ENCODE measurements at regions of chr3 and their contacts with region 1.

Region 1: DNA sequence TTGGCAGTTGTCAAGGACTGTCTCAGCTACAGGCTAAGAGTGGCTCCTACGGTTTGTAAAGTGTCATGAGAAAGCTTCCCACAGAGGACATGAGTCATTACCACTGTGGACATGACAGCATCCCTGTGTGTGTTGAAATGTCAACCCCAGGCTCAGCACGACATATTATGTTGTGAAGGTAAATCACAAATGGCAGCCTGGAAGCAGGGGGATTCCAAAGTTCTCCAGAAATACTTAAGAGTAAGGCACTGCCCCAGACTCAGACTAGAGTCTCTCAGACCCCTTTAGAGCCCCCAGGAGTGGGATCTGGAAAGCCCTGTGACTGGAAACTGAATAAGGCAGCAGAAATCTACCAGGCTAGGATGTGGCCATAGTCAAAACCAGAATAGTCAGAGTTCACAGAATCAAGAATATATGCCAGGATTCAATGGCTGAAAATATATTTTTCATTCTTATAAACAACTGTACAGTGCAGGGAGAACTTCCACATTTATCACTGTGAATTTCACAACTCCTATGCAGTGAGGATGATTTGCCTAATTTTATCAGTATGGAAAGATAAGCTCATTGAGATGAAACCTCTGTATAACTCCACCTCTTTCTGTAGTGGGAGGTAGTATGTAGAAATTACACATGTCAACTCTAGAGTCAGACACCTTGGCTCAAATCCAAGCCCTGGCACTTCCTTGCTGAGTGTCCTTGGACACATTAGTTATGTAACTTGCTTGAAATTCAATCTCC is 237.1 kb upstream of the CFAP20DC start:
- DNase-seq: peak; percentile 9
- H3K4me3 Mint-ChIP-seq: no peak overlapping the region
- H3K27ac Mint-ChIP-seq: peak overlapping the region; percentile 86
- H3K4me1 Mint-ChIP-seq: peaks cover 20% of the 10 kb centered on the region
- H3K27me3 Mint-ChIP-seq: peaks cover 4% of the 10 kb centered on the region

Region 2: GRCh38 chr3:59212128-59212779 is 74.7 kb before region 1 on chr3:
- intact Hi-C with region 1: loop called (anchors 2 kb)
- DNase-seq: no peak
- H3K4me3 Mint-ChIP-seq: no peak overlapping the region
- H3K27ac Mint-ChIP-seq: no peak overlapping the region
- H3K4me1 Mint-ChIP-seq: no peaks in the 10 kb centered on the region
- H3K27me3 Mint-ChIP-seq: peaks cover 12% of the 10 kb centered on the region

Region 3: DNA sequence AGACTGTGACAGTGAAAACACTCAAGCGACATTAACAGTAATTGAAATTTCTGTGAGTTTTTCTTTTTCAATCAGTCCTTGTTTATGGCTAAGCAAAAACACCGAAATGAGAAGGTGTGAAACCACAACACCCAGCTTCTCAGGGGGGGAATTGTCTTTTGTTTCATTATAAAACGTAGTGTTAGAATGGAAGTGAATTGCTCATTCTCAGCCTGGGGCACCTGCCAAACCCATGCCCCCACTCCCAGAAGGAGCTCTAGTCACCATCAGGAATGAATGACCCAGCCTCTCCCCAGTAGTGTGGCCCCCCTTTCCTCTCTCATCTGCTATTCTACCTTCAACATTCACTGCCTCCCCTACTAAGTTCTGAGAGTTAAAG is 51.3 kb before region 1 on chr3:
- intact Hi-C with region 1: loop called (anchors 2 kb)
- DNase-seq: no peak
- H3K4me3 Mint-ChIP-seq: no peak overlapping the region
- H3K27ac Mint-ChIP-seq: no peak overlapping the region
- H3K4me1 Mint-ChIP-seq: peaks cover 11% of the 10 kb centered on the region
- H3K27me3 Mint-ChIP-seq: peaks cover 8% of the 10 kb centered on the region

Region 4: GRCh38 chr3:59320080-59320479 is 33.1 kb after region 1 on chr3:
- intact Hi-C with region 1: no loop called
- DNase-seq: no peak
- H3K4me3 Mint-ChIP-seq: no peak overlapping the region
- H3K27ac Mint-ChIP-seq: no peak overlapping the region
- H3K4me1 Mint-ChIP-seq: peaks cover 4% of the 10 kb centered on the region
- H3K27me3 Mint-ChIP-seq: no peaks in the 10 kb centered on the region

Region 5: GRCh38 chr3:59406943-59407342 is 120.0 kb after region 1 on chr3:
- intact Hi-C with region 1: no loop called
- DNase-seq: no peak
- H3K4me3 Mint-ChIP-seq: no peak overlapping the region
- H3K27ac Mint-ChIP-seq: no peak overlapping the region
- H3K4me1 Mint-ChIP-seq: peaks cover 15% of the 10 kb centered on the region
- H3K27me3 Mint-ChIP-seq: peaks cover 1% of the 10 kb centered on the region

Region 6: DNA sequence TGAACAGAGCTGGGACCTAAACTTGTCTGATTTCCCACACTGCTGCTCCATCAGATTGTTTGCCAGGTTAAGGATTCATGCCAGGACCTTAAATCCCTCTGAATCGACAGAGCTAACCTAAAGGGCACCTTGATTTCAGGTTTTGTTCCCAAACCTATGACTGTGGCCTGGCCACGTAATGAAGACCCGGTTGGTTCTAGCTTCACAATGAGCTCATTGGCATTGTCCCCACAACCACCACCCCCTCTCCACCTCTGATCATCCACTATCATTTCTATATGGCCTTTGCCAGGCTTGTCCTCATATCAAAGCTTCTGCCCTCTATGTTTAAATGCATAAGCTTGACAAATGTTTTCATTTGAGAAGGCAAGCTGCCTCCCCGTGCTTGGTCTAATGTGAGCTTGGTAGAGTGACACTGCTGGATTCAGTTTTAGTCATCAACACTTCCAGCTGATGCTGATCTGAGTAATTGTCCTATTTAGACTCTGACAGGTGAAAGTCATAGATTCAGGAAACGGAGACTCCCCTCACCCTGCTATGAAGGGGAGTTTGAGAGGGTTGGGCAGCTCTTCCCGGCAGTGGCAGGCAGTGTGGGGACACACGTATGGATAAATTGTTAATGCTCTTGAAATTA is 170.0 kb after region 1 on chr3:
- intact Hi-C with region 1: loop called (anchors 1 kb)
- DNase-seq: peak; percentile 18
- H3K4me3 Mint-ChIP-seq: no peak overlapping the region
- H3K27ac Mint-ChIP-seq: no peak overlapping the region
- H3K4me1 Mint-ChIP-seq: peaks cover 36% of the 10 kb centered on the region
- H3K27me3 Mint-ChIP-seq: no peaks in the 10 kb centered on the region

Measured in activated T-helper 2 cell treated with anti-CD3 and anti-CD28 coated beads, Interferon-gamma antibody, Interleukin-2, Interleukin-4, amounts not matched to agents 10 μg/mL and 5 μg/mL and 100 μg/mL, durations not matched to agents 14 hours and 24 hours and 36 hours (primary cell).